BJ (cell line): ENCODE measurements at regions of chr21 and their contacts with region 1.

Region 1: GRCh38 chr21:29164325-29164942 is 34.0 kb downstream of the MAP3K7CL start:
- DNase-seq: no peak
- H3K4me3 ChIP-seq: no peak overlapping the region
- H3K27me3 ChIP-seq: no peaks in the 10 kb centered on the region
- CTCF ChIP-seq: peak; percentile 78

Region 2: DNA sequence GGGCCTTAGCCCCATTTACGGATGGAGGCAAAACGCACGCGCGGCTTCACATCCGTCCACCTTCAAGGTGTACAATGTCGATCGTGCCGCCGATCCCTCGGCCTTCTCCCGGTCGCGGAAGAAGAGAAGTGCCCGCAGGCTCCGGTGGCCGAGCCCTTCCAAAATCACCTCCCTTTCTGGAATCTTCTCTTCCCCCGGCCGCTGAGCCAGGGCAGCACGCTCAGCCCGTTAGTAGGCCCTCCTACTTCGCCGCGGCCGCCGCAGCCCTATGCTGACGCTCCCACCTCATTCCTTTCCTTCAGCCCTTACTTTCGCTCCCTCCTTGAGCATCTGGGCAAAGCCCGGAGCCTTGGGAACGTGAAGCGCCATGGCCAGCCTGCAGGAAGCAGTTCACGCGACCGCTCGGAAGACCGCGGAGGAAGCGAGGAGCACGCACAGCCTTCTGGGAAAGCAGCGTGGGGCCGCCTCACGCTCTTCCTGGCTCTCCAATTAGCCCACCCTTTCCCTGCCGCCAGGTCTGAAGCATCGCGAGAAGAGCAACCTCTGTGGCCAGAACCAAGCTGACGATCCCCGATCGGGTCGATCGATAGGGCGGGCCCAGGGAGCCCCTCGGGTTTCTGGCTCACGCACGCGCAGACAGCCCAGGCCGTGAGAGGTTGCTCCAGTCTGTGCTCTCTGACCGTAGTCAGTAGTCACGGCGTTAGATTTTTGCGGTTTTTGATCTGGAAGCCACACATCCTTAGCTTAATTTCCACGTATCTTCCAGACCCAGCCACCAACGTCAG is 91.0 kb before region 1 on chr21 and contains the start of gene CCT8:
- CTCF ChIA-PET with region 1: no interaction called
- POLR2A ChIA-PET with region 1: no interaction called
- DNase-seq: peak; percentile 94
- H3K4me3 ChIP-seq: peak within 1 kb of the TSS; percentile 82
- H3K27me3 ChIP-seq: no peaks in the 10 kb centered on the region
- CTCF ChIP-seq: no peak
- polyA plus RNA-seq, gene CCT8: 71.6 and 163 TPM in 2 replicates

Region 3: GRCh38 chr21:29175408-29176134 is 11.1 kb after region 1 on chr21:
- CTCF ChIA-PET with region 1: interaction called, 13 read pairs
- POLR2A ChIA-PET with region 1: no interaction called
- DNase-seq: no peak
- H3K4me3 ChIP-seq: no peak overlapping the region
- H3K27me3 ChIP-seq: no peaks in the 10 kb centered on the region
- CTCF ChIP-seq: no peak

Region 4: GRCh38 chr21:29293495-29293894 is 129.1 kb after region 1 on chr21:
- CTCF ChIA-PET with region 1: interaction called, 32 read pairs
- POLR2A ChIA-PET with region 1: no interaction called
- DNase-seq: no peak
- H3K4me3 ChIP-seq: no peak overlapping the region
- H3K27me3 ChIP-seq: no peaks in the 10 kb centered on the region
- CTCF ChIP-seq: no peak

Region 5: GRCh38 chr21:29360799-29361765 is 196.6 kb after region 1 on chr21:
- CTCF ChIA-PET with region 1: interaction called, 18 read pairs
- POLR2A ChIA-PET with region 1: no interaction called
- DNase-seq: no peak
- H3K4me3 ChIP-seq: no peak overlapping the region
- H3K27me3 ChIP-seq: no peaks in the 10 kb centered on the region
- CTCF ChIP-seq: no peak